ENCODE measurements at regions of chr14 and their contacts with region 1.

Region 1: DNA sequence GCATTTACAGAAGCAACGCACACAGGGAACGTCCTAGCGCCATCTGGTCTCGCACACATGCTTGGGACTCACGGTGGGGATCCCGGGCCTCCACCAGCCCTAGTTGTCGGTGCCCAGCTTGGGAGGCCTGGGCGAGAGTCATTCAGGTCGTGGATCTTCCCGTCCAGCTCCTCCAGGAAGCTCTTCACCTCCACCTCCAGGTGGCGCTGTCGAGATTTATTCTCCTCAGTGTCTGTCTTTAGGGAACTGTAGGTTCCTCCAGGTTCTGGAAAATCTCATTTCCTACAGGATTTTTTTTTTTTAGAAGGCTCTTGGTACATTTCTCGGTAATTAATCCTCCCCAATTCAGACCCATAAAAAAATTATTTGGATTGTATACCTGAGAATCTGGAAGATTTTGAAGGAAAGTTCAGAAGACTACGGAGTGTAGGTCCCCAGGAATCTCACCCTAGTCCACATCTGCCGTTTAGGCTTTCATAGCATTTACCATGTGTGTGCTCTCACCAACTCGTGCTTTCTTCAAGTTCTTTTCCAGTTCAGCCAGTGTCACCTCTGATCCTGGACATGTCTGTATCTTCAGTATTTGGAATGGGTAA is 910.0 kb downstream of the TMEM121 start:
- H3K4me3 Mint-ChIP-seq: no peak overlapping the region
- H3K27ac Mint-ChIP-seq: no peak overlapping the region
- H3K4me1 Mint-ChIP-seq: no peaks in the 10 kb centered on the region
- H3K27me3 Mint-ChIP-seq: no peaks in the 10 kb centered on the region

Region 2: GRCh38 chr14:106518054-106518943 is 81.9 kb after region 1 on chr14:
- intact Hi-C with region 1: loop called (anchors 5 kb)
- H3K4me3 Mint-ChIP-seq: no peak overlapping the region
- H3K27ac Mint-ChIP-seq: no peak overlapping the region
- H3K4me1 Mint-ChIP-seq: peaks cover 27% of the 10 kb centered on the region
- H3K27me3 Mint-ChIP-seq: peaks cover 13% of the 10 kb centered on the region

Region 3: DNA sequence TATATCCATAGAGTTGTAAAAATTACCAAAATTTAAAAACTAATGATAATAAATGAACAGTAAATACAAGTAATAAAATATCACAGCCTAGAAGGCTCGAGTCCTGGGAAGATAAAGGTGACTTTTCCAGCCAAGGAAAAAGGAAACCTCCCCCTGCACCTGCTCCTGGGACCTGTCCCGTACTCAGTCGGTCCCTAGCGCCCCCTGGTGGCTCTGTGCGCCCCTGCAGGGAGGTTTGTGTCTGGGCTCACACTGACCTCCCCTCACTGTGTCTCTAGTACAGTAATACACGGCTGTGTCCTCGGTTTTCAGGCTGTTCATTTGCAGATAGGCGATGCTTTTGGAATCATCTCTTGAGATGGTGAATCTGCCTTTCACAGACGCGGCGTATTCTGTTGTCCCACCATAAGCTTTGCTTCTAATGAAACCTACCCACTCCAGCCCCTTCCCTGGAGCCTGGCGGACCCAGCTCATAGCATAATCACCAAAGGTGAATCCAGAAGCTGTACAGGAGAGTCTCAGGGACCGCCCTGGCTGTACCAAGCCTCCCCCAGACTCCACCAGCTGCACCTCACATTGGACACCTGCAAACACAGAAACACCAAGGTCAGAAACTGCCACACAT is 120.4 kb after region 1 on chr14:
- intact Hi-C with region 1: loop called (anchors 5 kb)
- H3K4me3 Mint-ChIP-seq: no peak overlapping the region
- H3K27ac Mint-ChIP-seq: no peak overlapping the region
- H3K4me1 Mint-ChIP-seq: no peaks in the 10 kb centered on the region
- H3K27me3 Mint-ChIP-seq: no peaks in the 10 kb centered on the region